Dorsolateral prefrontal cortex (tissue), 120 donors: ENCODE measurements at regions of chr1 and their contacts with region 1.

Region 1: GRCh38 chr1:34865981-34866761 is 6.6 kb upstream of the SMIM12 start:
- DNase-seq: peak; percentile 70 to 90 (median 77)
- H3K4me3 ChIP-seq: peak overlapping the region; percentile 44 to 90 (median 72)
- H3K27ac ChIP-seq: peak overlapping the region in 57 of 59 donors; percentile 18 to 93 (median 80)
- H3K27me3 ChIP-seq: no peaks in the 10 kb centered on the region
- CTCF ChIP-seq: peak in 55 of 56 donors; percentile 90 to 100 (median 97)

Region 2: GRCh38 chr1:34696185-34696584 is 170.0 kb before region 1 on chr1:
- intact Hi-C with region 1: no loop called
- DNase-seq: no peak
- H3K4me3 ChIP-seq: no peak overlapping the region
- H3K27ac ChIP-seq: no peak overlapping the region
- H3K27me3 ChIP-seq: peaks cover 0 to 7% (median 0%) of the 10 kb centered on the region in 45 donors
- CTCF ChIP-seq: no peak

Region 3: GRCh38 chr1:34924759-34925555 is 58.8 kb after region 1 on chr1:
- intact Hi-C with region 1: loop called (anchors 5 kb)
- DNase-seq: no peak
- H3K4me3 ChIP-seq: peak overlapping the region in 53 of 59 donors; percentile 6 to 61 (median 41)
- H3K27ac ChIP-seq: peak overlapping the region in 49 of 59 donors; percentile 27 to 97 (median 65)
- H3K27me3 ChIP-seq: peaks cover 0 to 69% (median 12%) of the 10 kb centered on the region in 45 donors
- CTCF ChIP-seq: no peak

Region 4: DNA sequence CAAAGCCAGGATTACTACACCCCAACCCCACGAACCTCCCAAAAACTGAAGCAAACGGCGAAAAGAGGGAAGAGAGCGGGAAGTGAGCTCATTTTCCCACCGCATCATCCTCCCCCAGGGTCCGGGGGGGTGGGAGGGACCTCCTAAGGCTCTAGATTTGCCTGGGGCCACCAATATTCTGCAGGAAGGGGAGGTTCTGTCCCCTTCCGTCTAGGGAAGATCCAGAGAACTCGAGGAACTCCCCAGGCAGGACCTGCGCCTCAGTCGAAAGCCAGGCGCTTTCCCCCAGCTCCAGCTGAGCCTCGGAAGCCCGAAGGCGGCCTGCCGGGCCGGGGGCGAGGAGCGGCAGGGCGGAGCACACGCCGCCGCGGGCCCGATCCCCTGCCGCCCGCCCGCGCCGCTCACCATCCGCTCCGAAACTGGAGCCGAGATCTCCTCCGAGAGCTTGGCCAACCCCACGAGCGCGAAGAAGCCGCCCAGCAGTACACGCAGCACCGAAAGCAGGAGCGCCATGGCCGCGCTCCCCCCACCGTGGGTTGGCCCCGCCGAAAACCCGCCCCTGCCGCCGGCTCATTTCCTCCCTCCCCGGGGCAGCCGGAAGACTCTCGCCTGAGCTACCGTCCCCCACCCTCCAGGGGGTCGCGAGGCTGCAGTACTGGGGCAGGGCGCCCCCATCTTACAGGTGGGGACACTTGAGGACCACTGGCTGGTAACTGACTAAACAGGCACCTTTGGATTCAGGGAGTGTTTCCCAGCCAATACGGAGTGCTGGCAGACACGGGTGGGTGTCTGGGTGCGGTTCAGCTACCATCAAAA is 118.8 kb after region 1 on chr1 and contains the start of gene TMEM35B:
- intact Hi-C with region 1: loop called (anchors 10 kb)
- DNase-seq: peak in 9 of 10 donors; percentile 35 to 80 (median 54)
- H3K4me3 ChIP-seq: peak within 1 kb of the TSS; percentile 59 to 93 (median 79)
- H3K27ac ChIP-seq: peak within 1 kb of the TSS in 58 of 59 donors; percentile 48 to 95 (median 88)
- H3K27me3 ChIP-seq: no peaks in the 10 kb centered on the region
- CTCF ChIP-seq: peak in 6 of 56 donors; percentile 11 to 22 (median 14)
- total RNA-seq, gene TMEM35B: 0.79 to 14.2 (median 4.7) TPM